Uterus (tissue), 4 donors: ENCODE measurements at regions of chr2 and their contacts with region 1.

Region 1: GRCh38 chr2:168346725-168347477 is 99.5 kb upstream of the STK39 start:
- DNase-seq: peak; percentile 65
- H3K4me3 ChIP-seq: peak overlapping the region; percentile 38 to 45
- H3K27ac ChIP-seq: peak overlapping the region; percentile 54 to 55
- H3K4me1 ChIP-seq: no peaks in the 10 kb centered on the region
- H3K27me3 ChIP-seq: no peaks in the 10 kb centered on the region
- CTCF ChIP-seq: peak; percentile 80 to 91 (median 86)
- POLR2A ChIP-seq: no peak

Region 2: DNA sequence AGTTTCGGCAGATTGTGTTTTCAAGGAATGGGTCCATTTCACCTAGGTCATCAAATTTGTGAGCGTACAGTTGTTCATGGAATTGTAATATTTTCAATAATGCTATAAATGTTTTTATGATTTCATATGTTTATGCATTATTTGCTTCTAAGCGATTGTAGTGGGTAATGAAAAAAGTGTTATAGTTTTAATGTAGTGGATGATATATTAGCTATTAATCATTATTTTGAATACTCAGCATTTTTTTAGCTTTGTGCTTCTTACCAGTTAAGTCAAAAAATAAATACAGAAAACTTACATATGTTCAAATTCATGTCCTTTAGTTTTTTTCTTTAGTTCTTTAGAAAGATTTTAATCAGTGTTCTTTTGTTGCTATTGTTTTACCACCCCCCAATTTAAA is 776.5 kb before region 1 on chr2:
- intact Hi-C with region 1: no loop called
- DNase-seq: no peak
- H3K4me3 ChIP-seq: no peak overlapping the region
- H3K27ac ChIP-seq: no peak overlapping the region
- H3K4me1 ChIP-seq: no peaks in the 10 kb centered on the region
- H3K27me3 ChIP-seq: no peaks in the 10 kb centered on the region
- CTCF ChIP-seq: no peak
- POLR2A ChIP-seq: no peak

Region 3: GRCh38 chr2:167783261-167784075 is 563.4 kb before region 1 on chr2:
- intact Hi-C with region 1: no loop called
- DNase-seq: peak; percentile 24 to 40
- H3K4me3 ChIP-seq: no peak overlapping the region
- H3K27ac ChIP-seq: peak overlapping the region; percentile 3 to 49
- H3K4me1 ChIP-seq: peaks cover 0 to 7% of the 10 kb centered on the region in 2 donors
- H3K27me3 ChIP-seq: no peaks in the 10 kb centered on the region
- CTCF ChIP-seq: no peak
- POLR2A ChIP-seq: no peak

Region 4: GRCh38 chr2:167890739-167891138 is 456.2 kb before region 1 on chr2:
- intact Hi-C with region 1: no loop called
- DNase-seq: no peak
- H3K4me3 ChIP-seq: no peak overlapping the region
- H3K27ac ChIP-seq: no peak overlapping the region
- H3K4me1 ChIP-seq: no peaks in the 10 kb centered on the region
- H3K27me3 ChIP-seq: no peaks in the 10 kb centered on the region
- CTCF ChIP-seq: no peak
- POLR2A ChIP-seq: no peak

Region 5: DNA sequence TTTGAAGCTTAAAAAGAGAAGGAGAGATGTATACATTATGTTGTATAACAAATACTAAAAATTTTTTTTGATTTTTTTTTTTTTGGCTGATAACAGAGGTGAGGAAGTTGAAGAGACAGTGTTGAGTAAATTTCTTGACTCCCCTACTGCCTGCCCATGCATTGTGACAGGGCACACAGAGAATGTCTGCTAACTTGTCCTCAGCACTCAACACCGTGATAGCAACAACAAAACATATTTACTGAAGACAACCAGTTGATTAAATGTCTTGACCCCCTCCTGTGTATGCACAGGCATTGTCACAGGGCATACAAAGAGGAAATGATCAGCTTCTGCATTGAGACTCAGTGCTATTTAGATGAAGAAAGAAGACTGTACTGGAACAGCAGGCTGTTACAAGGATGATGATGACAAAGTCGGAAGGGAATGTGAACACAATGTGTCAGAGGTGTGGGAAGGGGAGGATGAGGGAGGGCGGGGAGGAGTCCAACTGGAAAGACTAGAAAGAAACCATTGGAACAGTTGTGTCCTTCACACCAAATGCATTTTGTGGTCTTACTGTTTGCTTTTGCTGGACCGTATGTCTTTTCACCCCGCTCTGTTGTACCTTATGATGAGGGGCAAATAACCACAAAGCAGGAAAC is 198.7 kb after region 1 on chr2:
- intact Hi-C with region 1: no loop called
- DNase-seq: peak in 1 of 2 donors; percentile 41
- H3K4me3 ChIP-seq: no peak overlapping the region
- H3K27ac ChIP-seq: no peak overlapping the region
- H3K4me1 ChIP-seq: peaks cover 0 to 7% of the 10 kb centered on the region in 2 donors
- H3K27me3 ChIP-seq: no peaks in the 10 kb centered on the region
- CTCF ChIP-seq: no peak
- POLR2A ChIP-seq: no peak

Region 6: GRCh38 chr2:168766600-168766999 is 419.7 kb after region 1 on chr2:
- intact Hi-C with region 1: loop called (anchors 10 kb)
- DNase-seq: no peak
- H3K4me3 ChIP-seq: no peak overlapping the region
- H3K27ac ChIP-seq: no peak overlapping the region
- H3K4me1 ChIP-seq: no peaks in the 10 kb centered on the region
- H3K27me3 ChIP-seq: no peaks in the 10 kb centered on the region
- CTCF ChIP-seq: no peak
- POLR2A ChIP-seq: no peak